ENCODE measurements at regions of chr5 and their contacts with region 1.

Region 1: DNA sequence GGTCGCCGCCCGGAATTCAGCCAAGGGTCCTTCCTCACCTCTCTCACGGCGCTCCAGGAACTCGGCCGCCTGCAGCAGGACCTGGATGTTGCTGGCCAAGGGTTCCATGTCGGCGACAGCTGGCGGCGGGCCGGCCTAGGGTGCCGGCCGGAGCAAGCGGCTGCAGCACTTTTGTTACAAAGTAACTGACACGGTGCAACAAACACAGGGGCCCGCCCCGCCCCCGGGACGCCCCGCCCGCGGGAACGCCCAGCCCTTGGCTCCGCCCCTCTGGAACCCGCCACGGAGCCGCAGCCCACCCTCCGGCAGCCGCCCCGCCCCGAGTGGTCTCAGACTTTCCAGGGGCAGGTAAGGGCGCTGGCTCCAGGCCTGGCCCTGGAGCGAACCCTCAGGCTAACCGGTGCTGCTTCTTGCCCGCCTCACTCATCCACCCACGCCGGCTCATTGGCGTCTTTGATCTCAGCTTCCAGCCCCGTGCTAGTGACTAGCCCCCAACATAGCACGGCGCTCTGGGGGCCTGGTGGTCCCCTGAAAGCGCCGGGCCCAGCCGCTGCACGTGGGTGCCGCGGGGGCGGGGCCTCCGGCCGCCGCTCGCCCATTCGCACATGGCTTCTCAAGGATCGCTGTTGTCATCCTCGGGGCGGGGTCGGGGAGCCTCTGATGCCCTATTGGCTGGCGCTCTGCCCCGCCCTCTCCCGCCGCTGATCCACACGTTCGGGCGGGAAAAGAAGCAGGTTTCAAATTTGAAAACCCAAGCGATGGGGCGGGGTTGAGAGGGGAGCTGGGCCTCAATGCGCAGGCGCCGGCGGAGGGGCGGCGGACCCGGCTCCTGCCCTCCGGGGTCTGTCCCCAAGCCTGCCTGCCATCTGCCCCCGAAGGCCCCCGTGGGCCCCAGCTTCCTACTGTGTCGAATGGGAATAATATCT is at the start of gene MXD3:
- DNase-seq: peak; percentile 97
- H3K4me3 ChIP-seq: peak within 1 kb of the TSS; percentile 59 to 84
- H3K27ac ChIP-seq: peak within 1 kb of the TSS; percentile 73 to 88
- H3K4me1 ChIP-seq: peaks cover 4 to 25% of the 10 kb centered on the region in 2 experiments; a peak in 1 of 4 replicates
- H3K27me3 ChIP-seq: no peaks in the 10 kb centered on the region
- CTCF ChIP-seq: no peak
- EP300 ChIP-seq: 0 out of 4 replicates have a peak, but pooled peaks of 1 of the 2 experiments have one; percentile 39
- RAD21 ChIP-seq: no peak
- polyA plus RNA-seq, gene MXD3: 22.6 and 23.1 TPM in 2 replicates

Region 2: DNA sequence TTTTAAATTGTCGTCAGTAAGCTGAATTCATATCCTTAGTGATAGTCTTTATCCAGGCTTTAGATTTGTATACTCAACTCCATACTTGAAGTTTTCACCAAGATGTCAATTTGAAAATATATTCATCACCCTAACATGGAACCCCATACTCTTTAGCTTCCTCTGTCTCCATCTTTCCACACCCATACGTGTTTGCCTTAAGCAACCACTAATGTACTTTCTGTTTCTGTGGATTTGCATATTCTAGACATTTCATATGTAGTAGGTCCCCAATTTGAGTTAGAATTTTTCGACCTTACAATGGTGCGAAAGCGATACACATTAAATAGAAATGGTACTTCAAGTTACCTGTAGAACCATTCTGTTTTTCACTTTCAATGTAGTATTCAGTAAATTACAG is 113.2 kb before region 1 on chr5:
- CTCF ChIA-PET with region 1: no interaction called
- POLR2A ChIA-PET with region 1: no interaction called
- DNase-seq: no peak
- H3K4me3 ChIP-seq: no peak overlapping the region
- H3K27ac ChIP-seq: no peak overlapping the region
- H3K4me1 ChIP-seq: no peaks in the 10 kb centered on the region
- H3K27me3 ChIP-seq: no peaks in the 10 kb centered on the region
- CTCF ChIP-seq: no peak
- EP300 ChIP-seq: no peak
- RAD21 ChIP-seq: no peak

Region 3: DNA sequence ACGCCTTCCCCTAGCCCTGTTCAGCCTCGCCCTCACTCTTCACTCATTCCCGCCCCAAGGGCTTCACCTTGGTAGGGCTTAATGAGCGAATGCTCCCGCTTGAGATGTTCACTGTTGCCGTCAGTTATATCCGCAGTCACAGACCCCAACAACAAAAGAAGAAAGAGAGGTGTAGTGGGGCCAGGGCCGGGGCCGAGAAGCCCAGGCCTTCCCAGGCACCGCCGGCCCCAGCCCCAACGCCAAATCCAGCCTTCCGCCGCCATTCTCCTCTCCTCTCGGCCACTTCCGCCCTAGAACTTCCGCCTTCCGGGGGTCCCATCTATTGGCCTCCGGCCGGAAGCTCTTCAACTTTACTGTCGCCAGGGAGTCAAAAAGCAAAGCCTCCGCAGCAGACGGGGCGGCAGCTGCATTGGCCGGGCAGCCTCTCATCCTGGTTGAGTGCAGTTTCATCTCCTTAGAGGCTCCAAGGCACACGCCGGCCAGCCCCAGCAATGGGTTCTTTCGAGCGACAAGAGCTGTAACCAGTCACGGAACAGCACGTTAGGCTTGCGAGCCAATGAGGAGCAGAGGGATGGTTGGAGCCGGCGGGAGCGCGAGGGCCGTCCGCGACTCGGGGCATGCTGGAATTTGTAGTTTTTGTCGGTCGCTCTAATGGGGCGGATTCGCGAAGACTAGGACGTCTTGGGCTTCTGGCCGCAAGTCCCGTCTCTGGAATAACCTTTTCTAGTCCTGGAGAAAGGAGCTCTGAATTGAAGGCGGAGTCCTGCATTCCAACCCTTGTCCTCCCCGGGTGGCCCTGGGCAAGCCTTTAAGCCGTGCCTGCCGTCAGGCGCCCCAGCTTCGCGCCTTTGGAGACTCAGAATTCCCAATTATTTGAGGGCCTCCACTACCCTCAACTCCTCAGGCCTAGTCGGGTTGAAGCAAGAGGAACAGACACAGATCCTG is 39.7 kb after region 1 on chr5 and contains the start of gene LMAN2:
- CTCF ChIA-PET with region 1: interaction called, 12 read pairs
- POLR2A ChIA-PET with region 1: interaction called, 3 read pairs
- DNase-seq: peak; percentile 95
- H3K4me3 ChIP-seq: peak within 1 kb of the TSS; percentile 96 to 100
- H3K27ac ChIP-seq: peak within 1 kb of the TSS; percentile 98
- H3K4me1 ChIP-seq: peaks cover 5 to 23% of the 10 kb centered on the region in 2 experiments; a peak in 3 of 4 replicates
- H3K27me3 ChIP-seq: no peaks in the 10 kb centered on the region
- CTCF ChIP-seq: no peak
- EP300 ChIP-seq: no peak
- RAD21 ChIP-seq: no peak
- polyA plus RNA-seq, gene LMAN2: 380 and 500 TPM in 2 replicates